ENCODE measurements at regions of chr10 and their contacts with region 1.

Region 1: GRCh38 chr10:89337484-89337883 is 9.7 kb downstream of the IFIT3 start:
- DNase-seq: peak in 1 of 10 donors; percentile 57

Region 2: DNA sequence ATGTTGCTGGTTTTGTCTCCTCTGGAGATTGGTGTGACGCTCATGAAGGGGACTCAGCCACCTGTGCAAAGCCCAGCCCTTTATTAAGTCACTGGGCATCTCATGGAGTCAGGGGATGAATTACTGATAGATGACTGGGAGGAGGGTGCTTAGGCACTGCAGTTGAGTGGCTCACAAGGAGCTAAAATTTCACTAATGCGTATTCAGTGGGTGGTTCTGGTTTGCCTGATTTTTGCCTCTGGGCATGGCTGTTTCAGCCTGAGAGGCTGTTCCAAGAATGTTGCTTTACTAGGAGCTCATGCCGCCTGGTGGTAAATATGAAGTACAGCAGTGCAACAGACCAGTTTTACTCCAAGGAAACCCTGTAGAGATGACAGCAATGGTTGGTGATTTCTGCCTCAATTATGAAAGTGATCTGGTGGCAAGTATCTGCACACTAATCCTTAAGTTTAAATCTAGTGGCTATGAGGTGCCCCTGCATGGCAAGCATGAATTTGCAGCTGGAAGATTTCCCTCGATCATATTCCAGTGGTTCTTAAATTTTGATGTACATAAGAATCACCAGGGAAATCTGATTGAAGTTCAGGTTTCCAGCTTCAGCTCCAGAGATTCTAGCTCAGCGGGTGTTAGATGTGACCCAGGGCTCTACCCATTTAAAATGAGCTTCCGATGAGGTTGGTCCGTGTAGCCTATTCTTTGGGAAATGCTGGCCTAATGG is 404.8 kb before region 1 on chr10:
- intact Hi-C with region 1: no loop called
- DNase-seq: peak in 5 of 10 donors; percentile 30 to 89 (median 39)

Region 3: DNA sequence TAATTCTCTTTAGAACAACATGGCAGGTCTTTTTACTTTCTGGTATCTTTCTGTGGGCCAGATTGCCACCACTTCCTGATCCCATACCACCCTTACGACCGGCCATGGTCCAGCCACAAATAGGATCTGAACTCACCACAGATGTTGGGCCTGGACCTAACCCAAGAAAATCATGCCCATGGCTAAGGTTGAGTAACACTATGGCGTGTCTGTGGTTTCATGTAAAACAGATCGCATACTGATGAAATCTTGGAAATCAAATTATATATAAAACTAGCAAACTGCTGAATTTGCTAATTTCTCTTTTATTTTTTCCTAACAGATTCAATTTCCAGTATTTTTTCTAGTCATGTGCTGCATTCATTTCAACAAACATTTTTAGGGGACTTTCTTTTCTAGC is 207.6 kb before region 1 on chr10:
- intact Hi-C with region 1: no loop called
- DNase-seq: peak in 2 of 10 donors; percentile 16 to 82

Region 4: DNA sequence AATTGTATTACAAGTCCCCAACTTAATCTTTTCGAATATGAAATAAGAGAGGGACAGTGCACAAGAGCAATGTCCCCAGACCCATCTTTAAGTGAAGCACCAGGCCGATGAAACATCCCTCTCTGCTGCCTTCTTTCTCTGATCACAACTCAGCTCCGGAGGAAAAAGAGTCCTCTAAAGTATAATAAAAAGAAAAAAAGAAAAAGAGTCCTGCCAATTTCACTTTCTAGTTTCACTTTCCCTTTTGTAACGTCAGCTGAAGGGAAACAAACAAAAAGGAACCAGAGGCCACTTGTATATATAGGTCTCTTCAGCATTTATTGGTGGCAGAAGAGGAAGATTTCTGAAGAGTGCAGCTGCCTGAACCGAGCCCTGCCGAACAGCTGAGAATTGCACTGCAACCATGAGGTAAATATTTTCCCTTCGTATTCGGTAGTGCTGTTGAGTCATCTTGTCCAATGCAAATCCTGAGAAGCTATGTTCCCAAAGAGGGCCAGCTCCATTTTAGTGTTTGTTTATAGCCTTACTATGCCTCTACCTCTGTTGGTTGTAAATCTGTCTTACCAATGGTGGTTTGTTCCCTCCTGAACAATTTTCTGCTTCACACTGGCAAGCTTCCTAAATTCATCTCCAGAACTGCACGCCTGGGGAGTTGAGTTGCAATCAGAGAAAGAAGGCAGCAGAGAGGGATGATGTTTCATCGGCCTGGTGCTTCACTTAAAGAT is 35.6 kb before region 1 on chr10 and contains the start of gene IFIT2:
- intact Hi-C with region 1: loop called (anchors 5 kb)
- DNase-seq: peak in 5 of 10 donors; percentile 31 to 90 (median 34)

Region 5: DNA sequence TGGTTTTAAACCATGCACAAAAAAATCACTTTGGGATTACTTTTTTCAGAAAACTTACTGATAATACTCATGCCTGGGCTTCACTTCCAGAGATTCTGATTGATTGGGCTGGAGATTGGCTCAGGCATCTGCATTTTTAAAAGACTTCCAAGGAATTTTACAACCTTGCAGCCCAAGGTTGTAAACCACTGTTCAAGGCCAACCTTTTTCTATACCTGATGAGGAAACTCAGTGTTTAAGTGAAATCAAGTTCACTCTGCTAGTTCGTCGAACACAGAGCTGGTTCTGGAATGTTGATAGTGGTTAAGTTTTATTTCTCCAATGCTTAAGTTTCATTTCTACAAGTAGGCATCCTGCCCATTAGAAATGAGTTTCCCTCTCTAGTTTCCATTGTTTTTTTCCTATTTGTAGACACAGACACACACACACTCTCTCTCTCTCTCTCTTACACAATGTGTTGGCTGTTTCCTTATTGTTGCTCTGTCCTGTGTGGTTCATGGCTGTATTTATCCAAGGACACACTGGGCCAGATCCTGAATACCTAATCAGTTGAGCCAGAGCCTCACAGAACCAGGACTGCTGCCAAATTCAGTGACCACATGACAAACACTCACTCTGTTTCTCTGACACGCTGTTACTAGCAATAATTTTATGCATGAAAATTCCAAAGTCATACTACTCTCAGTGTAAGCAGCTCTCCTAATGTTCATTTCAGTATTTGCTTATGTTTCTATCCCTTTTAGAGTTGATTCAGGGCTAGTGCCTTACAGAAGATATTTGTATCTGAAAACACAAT is 36.6 kb after region 1 on chr10:
- intact Hi-C with region 1: no loop called
- DNase-seq: peak in 9 of 10 donors; percentile 49 to 95 (median 81)

Measured in posterior cingulate gyrus (tissue), 11 donors.